ENCODE measurements at regions of chr7 and their contacts with region 1.

Region 1: GRCh38 chr7:151351027-151351426 is 9.4 kb downstream of the NUB1 start:
- DNase-seq: peak; percentile 79
- ATAC-seq: peak; percentile 34
- H3K4me3 Mint-ChIP-seq: peak overlapping the region; percentile 66
- H3K27ac Mint-ChIP-seq: peak overlapping the region; percentile 95
- H3K4me1 Mint-ChIP-seq: peaks cover 48% of the 10 kb centered on the region
- H3K27me3 Mint-ChIP-seq: no peaks in the 10 kb centered on the region

Region 2: GRCh38 chr7:151172273-151173141 is 178.5 kb before region 1 on chr7:
- CTCF ChIA-PET with region 1: interaction called, 4 read pairs
- POLR2A ChIA-PET with region 1: no interaction called
- intact Hi-C with region 1: loop called in 1 of 2 experiments (anchors 5 kb)
- DNase-seq: peak; percentile 90
- ATAC-seq: peak; percentile 74
- H3K4me3 Mint-ChIP-seq: no peak overlapping the region
- H3K27ac Mint-ChIP-seq: no peak overlapping the region
- H3K4me1 Mint-ChIP-seq: peaks cover 8% of the 10 kb centered on the region
- H3K27me3 Mint-ChIP-seq: peaks cover 48% of the 10 kb centered on the region

Region 3: DNA sequence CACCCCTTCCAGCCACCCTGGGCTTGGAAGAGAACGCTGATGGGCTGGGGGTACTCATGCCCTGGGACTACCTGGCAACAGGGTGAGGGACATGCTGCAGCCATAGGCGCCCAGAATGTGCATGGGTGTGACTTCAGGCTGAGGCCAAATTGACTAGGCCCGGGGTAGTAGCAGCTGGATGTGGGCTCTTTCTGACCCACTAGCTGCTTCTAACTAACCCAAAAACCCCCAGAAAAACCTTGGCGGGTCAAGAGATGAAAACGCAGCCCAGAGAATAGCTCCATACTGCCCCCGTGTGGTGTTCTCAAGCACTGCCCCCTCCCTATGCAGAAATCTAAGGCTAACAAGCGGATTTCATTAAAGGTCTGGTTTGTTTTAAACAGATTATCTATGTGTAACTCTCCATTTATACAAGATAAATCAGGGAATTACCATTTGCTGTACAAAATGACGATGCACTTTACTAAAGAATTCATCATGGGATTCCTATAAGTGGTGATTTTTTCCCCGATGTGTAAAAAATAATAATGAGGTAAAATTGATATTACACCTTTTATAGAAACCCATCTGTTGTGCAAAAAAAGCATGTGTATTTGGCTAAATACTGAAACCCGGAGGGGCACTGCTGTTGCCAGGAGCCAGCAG is 106.7 kb before region 1 on chr7:
- CTCF ChIA-PET with region 1: interaction called, 9 read pairs
- POLR2A ChIA-PET with region 1: no interaction called
- intact Hi-C with region 1: loop called in 1 of 2 experiments (anchors 2 kb)
- DNase-seq: peak; percentile 81
- ATAC-seq: peak; percentile 27
- H3K4me3 Mint-ChIP-seq: peak overlapping the region; percentile 58
- H3K27ac Mint-ChIP-seq: no peak overlapping the region
- H3K4me1 Mint-ChIP-seq: peaks cover 36% of the 10 kb centered on the region
- H3K27me3 Mint-ChIP-seq: peaks cover 23% of the 10 kb centered on the region

Region 4: GRCh38 chr7:151315038-151315655 is 35.9 kb before region 1 on chr7:
- CTCF ChIA-PET with region 1: interaction called, 152 read pairs
- POLR2A ChIA-PET with region 1: no interaction called
- intact Hi-C with region 1: loop called (anchors 1 kb)
- DNase-seq: peak; percentile 83
- ATAC-seq: peak; percentile 77
- H3K4me3 Mint-ChIP-seq: no peak overlapping the region
- H3K27ac Mint-ChIP-seq: no peak overlapping the region
- H3K4me1 Mint-ChIP-seq: peaks cover 12% of the 10 kb centered on the region
- H3K27me3 Mint-ChIP-seq: no peaks in the 10 kb centered on the region

Region 5: DNA sequence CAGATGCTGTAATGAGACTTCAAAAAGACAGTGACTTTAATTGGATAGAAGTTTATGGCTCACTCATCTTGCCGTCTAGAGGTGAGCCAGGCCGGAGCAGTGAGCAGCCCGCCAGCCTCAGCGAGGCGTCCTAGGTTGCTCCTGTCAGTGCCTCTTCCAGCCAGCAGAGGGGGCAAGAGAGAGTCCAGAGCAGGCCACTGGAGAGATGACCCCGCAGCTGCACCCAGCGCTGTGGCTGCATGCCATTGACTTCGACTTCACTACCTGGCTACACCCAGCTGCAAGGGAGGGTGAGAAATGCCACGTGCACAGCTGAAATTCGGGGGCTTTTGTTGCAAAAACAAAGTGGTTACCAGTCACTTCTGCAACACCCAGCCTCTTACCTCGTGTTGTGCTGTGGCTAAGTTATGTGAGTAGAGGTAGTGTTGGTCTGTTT is 17.1 kb after region 1 on chr7:
- CTCF ChIA-PET with region 1: interaction called, 13 read pairs
- POLR2A ChIA-PET with region 1: no interaction called
- intact Hi-C with region 1: no loop called
- DNase-seq: peak; percentile 88
- ATAC-seq: peak; percentile 100
- H3K4me3 Mint-ChIP-seq: no peak overlapping the region
- H3K27ac Mint-ChIP-seq: no peak overlapping the region
- H3K4me1 Mint-ChIP-seq: peaks cover 10% of the 10 kb centered on the region
- H3K27me3 Mint-ChIP-seq: no peaks in the 10 kb centered on the region

Region 6: DNA sequence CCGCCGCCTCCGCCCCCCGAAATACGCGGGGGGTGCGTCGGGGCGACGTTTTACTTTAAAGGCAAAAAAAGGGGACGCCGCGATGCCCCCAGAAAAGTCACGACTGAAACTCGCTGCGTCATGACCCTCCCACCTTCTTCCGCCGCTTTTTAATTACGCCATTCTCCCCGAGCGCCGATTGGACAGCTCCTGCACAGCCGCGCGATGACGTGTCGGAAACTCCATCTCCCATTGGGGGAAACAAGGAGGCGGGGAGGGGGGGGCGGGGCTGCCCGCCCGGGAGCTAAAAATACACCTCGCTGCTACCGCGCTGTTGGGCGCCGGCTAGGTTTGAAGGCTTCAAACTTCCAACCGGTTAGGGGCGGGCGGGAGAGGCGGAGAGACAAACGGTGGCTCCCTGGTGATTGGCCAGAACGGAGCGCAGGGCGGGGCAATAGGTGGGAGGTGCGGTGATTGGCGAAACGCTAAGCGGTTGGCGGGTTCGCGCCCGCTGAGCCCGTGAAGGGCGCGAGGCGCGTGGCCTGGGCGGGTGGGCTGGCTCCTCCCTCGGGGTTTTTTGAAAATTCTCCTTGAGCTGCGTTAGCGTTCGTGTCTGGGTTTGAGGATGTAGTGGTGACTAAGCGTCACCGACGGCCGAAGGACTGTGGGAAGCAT is 168.9 kb after region 1 on chr7 and contains the start of gene RHEB:
- CTCF ChIA-PET with region 1: interaction called, 4 read pairs
- POLR2A ChIA-PET with region 1: no interaction called
- intact Hi-C with region 1: loop called (anchors 1 to 5 kb)
- DNase-seq: peak; percentile 99
- ATAC-seq: peak; percentile 90
- H3K4me3 Mint-ChIP-seq: peak within 1 kb of the TSS; percentile 84
- H3K27ac Mint-ChIP-seq: peak within 1 kb of the TSS; percentile 97
- H3K4me1 Mint-ChIP-seq: peaks cover 35% of the 10 kb centered on the region
- H3K27me3 Mint-ChIP-seq: no peaks in the 10 kb centered on the region
- total RNA-seq, gene RHEB: 42.8 to 43.0 TPM

Region 7: GRCh38 chr7:151954866-151955820 is 604.1 kb after region 1 on chr7:
- CTCF ChIA-PET with region 1: no interaction called
- POLR2A ChIA-PET with region 1: no interaction called
- intact Hi-C with region 1: no loop called
- DNase-seq: no peak
- ATAC-seq: no peak
- H3K4me3 Mint-ChIP-seq: no peak overlapping the region
- H3K27ac Mint-ChIP-seq: no peak overlapping the region
- H3K4me1 Mint-ChIP-seq: no peaks in the 10 kb centered on the region
- H3K27me3 Mint-ChIP-seq: no peaks in the 10 kb centered on the region

Measured in activated CD4-positive, alpha-beta T cell treated with anti-CD3 and anti-CD28 coated beads for 36 hours (primary cell).